SK-N-SH (cell line): ENCODE measurements at regions of chr5 and their contacts with region 1.

Region 1: GRCh38 chr5:174317259-174317894 is 271.9 kb downstream of the NSG2 start:
- DNase-seq: peak; percentile 84
- H3K4me3 ChIP-seq: peak overlapping the region in 1 of 2 experiments; percentile 33; a peak in 1 of 4 replicates
- H3K27ac ChIP-seq: no peak overlapping the region
- H3K4me1 ChIP-seq: peaks cover 0 to 12% of the 10 kb centered on the region in 2 experiments; a peak in 1 of 4 replicates
- H3K27me3 ChIP-seq: no peaks in the 10 kb centered on the region; the same call in 1 of the 2 replicates
- CTCF ChIP-seq: peak; percentile 85
- EP300 ChIP-seq: 0 out of 4 replicates have a peak, but pooled peaks of 1 of the 2 experiments have one; percentile 7
- RAD21 ChIP-seq: peak; percentile 99

Region 2: GRCh38 chr5:173972925-173973615 is 344.3 kb before region 1 on chr5:
- CTCF ChIA-PET with region 1: interaction called, 28 read pairs
- POLR2A ChIA-PET with region 1: no interaction called
- DNase-seq: peak; percentile 91
- H3K4me3 ChIP-seq: peak overlapping the region in 1 of 2 experiments; percentile 33; a peak in 2 of 4 replicates
- H3K27ac ChIP-seq: no peak overlapping the region
- H3K4me1 ChIP-seq: peaks cover 0 to 8% of the 10 kb centered on the region in 2 experiments; a peak in 1 of 4 replicates
- H3K27me3 ChIP-seq: no peaks in the 10 kb centered on the region
- CTCF ChIP-seq: peak; percentile 83
- EP300 ChIP-seq: no peak
- RAD21 ChIP-seq: peak; percentile 96

Region 3: GRCh38 chr5:174030289-174030688 is 287.1 kb before region 1 on chr5:
- CTCF ChIA-PET with region 1: interaction called, 25 read pairs
- POLR2A ChIA-PET with region 1: no interaction called
- DNase-seq: no peak
- H3K4me3 ChIP-seq: no peak overlapping the region
- H3K27ac ChIP-seq: no peak overlapping the region
- H3K4me1 ChIP-seq: no peaks in the 10 kb centered on the region
- H3K27me3 ChIP-seq: no peaks in the 10 kb centered on the region
- CTCF ChIP-seq: no peak
- EP300 ChIP-seq: no peak
- RAD21 ChIP-seq: no peak

Region 4: DNA sequence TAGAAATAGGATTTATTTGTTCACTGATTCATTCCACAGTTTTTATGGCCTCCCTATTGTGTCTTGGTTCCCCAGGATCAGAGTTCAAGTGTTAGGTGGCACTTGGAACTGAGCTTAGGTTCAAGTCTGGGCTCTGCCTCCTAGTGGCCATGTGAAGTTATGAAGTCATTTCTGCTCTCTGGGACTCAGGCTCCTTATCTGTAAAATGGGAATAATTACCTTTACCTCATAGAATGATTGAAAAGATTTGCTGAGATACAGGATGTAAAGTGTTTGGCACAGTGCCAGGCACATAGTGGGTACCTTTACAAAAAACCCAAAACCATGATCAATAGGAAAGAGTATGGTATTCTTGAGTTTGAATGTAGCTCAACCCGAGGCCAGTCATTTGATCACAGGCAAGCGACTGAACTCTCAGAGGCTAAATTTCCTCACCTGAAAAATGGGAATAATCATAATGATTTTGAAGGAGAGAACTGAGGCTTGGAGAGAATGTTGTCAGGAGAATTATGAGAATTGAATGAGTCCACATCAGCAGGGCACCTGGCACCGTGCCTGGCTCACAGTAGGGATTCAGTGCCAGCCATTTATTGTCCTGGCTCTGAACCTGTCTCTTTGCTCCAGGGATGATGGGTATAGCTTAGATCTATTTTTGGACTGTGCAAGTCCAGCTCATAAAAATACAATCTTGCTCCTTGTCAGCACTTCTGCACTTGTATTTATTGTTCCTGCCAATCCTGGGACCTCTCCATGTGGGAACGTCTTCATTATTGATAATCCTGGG is 261.1 kb before region 1 on chr5:
- CTCF ChIA-PET with region 1: interaction called, 35 read pairs
- POLR2A ChIA-PET with region 1: interaction called, 3 read pairs
- DNase-seq: no peak
- H3K4me3 ChIP-seq: no peak overlapping the region
- H3K27ac ChIP-seq: no peak overlapping the region; a peak in 1 of 4 replicates
- H3K4me1 ChIP-seq: peaks cover 0 to 13% of the 10 kb centered on the region in 2 experiments; a peak in 2 of 4 replicates
- H3K27me3 ChIP-seq: no peaks in the 10 kb centered on the region
- CTCF ChIP-seq: peak; percentile 33; the same call in 1 of the 2 replicates
- EP300 ChIP-seq: no peak
- RAD21 ChIP-seq: no peak

Region 5: GRCh38 chr5:174300941-174301761 is 16.2 kb before region 1 on chr5:
- CTCF ChIA-PET with region 1: interaction called, 29 read pairs
- POLR2A ChIA-PET with region 1: no interaction called
- DNase-seq: peak; percentile 41
- H3K4me3 ChIP-seq: no peak overlapping the region
- H3K27ac ChIP-seq: peak overlapping the region in 1 of 2 experiments; percentile 47; a peak in 2 of 4 replicates
- H3K4me1 ChIP-seq: peaks cover 0 to 21% of the 10 kb centered on the region in 2 experiments; a peak in 2 of 4 replicates
- H3K27me3 ChIP-seq: no peaks in the 10 kb centered on the region
- CTCF ChIP-seq: no peak
- EP300 ChIP-seq: no peak
- RAD21 ChIP-seq: no peak

Region 6: GRCh38 chr5:174306345-174307030 is 10.9 kb before region 1 on chr5:
- CTCF ChIA-PET with region 1: interaction called, 29 read pairs
- POLR2A ChIA-PET with region 1: no interaction called
- DNase-seq: no peak
- H3K4me3 ChIP-seq: no peak overlapping the region
- H3K27ac ChIP-seq: no peak overlapping the region
- H3K4me1 ChIP-seq: peaks cover 0 to 36% of the 10 kb centered on the region in 2 experiments; a peak in 1 of 4 replicates
- H3K27me3 ChIP-seq: no peaks in the 10 kb centered on the region
- CTCF ChIP-seq: no peak
- EP300 ChIP-seq: no peak
- RAD21 ChIP-seq: no peak

Region 7: GRCh38 chr5:174327317-174328236 is 10.2 kb after region 1 on chr5:
- CTCF ChIA-PET with region 1: interaction called, 46 read pairs
- POLR2A ChIA-PET with region 1: no interaction called
- DNase-seq: peak; percentile 77
- H3K4me3 ChIP-seq: no peak overlapping the region; a peak in 1 of 4 replicates
- H3K27ac ChIP-seq: peak overlapping the region in 1 of 2 experiments; percentile 95; a peak in 2 of 4 replicates
- H3K4me1 ChIP-seq: peaks cover 17 to 50% of the 10 kb centered on the region in 2 experiments
- H3K27me3 ChIP-seq: no peaks in the 10 kb centered on the region
- CTCF ChIP-seq: peak; percentile 97
- EP300 ChIP-seq: peak in 1 of 2 experiments; percentile 23; a peak in 1 of 4 replicates
- RAD21 ChIP-seq: peak; percentile 90

Region 8: DNA sequence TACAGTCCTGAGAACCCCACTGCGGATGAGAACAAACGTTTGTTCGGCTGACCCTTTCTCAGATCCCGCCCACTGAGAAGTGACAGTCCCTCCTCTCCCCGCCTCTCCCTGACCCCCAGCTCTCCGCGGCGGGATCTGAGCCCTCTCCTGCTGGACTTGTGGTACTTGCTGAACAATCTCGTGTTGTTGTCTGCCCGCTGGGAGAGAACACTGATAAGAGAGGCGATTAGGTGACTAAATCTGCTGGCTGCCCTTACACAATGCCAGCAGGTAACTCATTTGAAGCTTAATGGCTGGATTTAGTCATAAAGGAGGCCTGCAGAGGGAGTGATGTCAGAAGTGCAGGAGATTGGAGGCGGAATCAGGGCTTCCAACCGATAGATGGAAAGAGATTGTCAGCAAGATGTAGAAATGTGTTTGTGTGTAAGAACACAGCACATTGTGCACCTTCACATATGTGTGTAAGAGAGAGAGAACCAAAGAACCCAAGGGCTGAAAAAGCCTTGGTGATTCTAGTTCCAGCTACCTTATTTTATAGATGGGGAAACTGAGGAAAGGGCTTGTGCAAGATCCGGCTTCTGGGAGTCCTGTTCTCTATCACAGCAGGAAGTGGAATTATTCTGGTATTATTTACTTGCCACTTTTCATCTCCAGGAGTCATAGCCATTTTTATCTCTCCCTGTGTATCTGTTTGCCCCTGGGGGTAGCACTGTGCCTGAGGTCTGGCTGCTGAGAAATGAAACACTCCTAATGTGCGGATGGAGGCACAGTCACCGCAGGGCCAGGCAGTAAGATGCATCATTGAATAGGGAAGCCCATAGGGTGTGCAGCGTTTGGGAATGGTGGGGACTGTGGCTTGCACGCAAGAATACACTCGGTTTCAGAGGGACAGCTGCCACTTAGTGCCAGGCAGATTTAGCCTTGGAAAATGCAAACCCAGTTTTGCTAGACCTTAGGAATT is 203.3 kb after region 1 on chr5:
- CTCF ChIA-PET with region 1: no interaction called
- POLR2A ChIA-PET with region 1: no interaction called
- DNase-seq: peak; percentile 75
- H3K4me3 ChIP-seq: no peak overlapping the region
- H3K27ac ChIP-seq: no peak overlapping the region
- H3K4me1 ChIP-seq: peaks cover 0 to 11% of the 10 kb centered on the region in 2 experiments; a peak in 2 of 4 replicates
- H3K27me3 ChIP-seq: no peaks in the 10 kb centered on the region
- CTCF ChIP-seq: no peak
- EP300 ChIP-seq: no peak
- RAD21 ChIP-seq: no peak

Region 9: DNA sequence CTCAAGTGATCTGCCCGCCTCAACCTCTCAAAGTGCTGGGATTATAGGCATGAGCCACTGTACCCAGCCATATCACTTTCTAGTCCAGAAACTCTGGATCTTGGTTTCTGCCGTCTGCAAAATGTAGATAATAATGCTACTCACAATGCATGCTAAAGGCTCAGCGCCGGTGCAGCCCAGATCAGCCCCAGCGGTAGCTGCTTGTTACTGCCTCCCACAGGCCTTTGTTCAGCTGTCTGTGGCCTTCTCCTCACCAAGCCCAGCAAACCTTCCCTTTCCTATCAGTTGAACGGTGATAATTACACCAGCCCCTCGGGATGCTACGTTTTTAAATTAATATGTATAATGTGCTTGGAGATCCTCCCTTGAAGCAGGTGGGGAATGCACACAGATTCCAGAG is 380.8 kb after region 1 on chr5:
- CTCF ChIA-PET with region 1: no interaction called
- POLR2A ChIA-PET with region 1: no interaction called
- DNase-seq: no peak
- H3K4me3 ChIP-seq: no peak overlapping the region
- H3K27ac ChIP-seq: no peak overlapping the region
- H3K4me1 ChIP-seq: peaks cover 0 to 3% of the 10 kb centered on the region in 2 experiments; a peak in 1 of 4 replicates
- H3K27me3 ChIP-seq: no peaks in the 10 kb centered on the region
- CTCF ChIP-seq: no peak
- EP300 ChIP-seq: no peak
- RAD21 ChIP-seq: no peak

Region 10: DNA sequence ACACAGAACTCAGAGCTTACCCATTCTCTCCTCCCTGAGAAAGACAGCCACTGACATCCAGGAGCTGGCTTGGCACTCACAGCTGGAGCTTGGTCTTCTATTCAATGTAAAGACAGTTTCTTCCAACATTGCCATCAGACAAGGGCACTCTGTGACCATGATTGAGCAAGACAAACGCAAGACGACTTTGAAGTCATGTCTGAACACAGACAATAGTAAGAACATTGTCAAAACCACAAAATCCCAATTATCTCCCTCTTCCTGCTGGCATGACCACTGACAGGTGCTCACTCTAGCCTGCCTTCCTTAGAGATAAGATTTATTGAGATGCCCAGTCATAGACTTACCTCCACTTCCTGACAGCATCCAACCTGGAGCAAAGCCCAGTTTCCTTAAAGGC is 735.0 kb after region 1 on chr5:
- CTCF ChIA-PET with region 1: no interaction called
- POLR2A ChIA-PET with region 1: no interaction called
- DNase-seq: no peak
- H3K4me3 ChIP-seq: no peak overlapping the region
- H3K27ac ChIP-seq: no peak overlapping the region
- H3K4me1 ChIP-seq: no peaks in the 10 kb centered on the region
- H3K27me3 ChIP-seq: no peaks in the 10 kb centered on the region
- CTCF ChIP-seq: no peak
- EP300 ChIP-seq: no peak
- RAD21 ChIP-seq: no peak